ENCODE measurements at regions of chrX and their contacts with region 1.

Region 1: DNA sequence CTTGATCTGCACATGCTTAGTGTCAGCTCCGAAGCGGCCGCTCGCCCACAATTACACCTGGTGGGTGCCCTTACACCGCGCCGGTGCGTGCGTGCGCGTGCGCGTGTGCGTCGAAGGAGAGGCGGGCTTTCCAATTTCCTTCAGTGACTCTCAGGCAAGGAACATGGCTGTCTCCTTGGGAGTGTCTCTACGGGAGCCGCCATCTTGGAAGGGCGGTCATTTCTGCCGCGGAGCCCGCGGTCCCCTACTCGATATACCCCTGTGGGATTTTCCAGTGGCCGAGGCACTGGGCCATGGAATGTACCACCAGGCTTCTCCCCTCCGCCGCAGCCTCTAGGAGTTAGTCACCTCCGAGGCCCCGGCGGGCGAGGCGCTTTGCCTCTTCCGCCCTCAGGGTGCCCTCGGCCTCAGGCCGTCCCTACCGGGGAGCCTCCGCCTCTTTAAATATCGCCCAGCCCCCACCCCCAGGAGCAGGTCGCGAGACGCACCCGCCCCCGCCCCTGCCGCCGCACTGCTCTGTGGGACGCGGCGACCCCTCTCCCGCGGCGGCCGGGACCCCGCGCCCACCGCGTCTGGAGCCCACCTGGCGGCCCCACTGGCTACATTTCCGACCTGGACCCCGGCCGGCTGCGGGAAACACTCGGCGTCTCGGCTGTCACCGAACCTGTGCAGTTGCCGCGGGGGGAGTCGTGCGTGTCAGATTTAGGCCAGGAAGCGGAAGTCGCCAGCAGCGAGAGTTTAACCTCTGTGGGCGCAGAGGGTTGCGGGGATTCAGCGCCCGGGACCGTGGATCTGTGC is at the start of gene ZNF41:
- DNase-seq: peak; percentile 87
- ATAC-seq: peak; percentile 82
- H3K4me3 ChIP-seq: peak within 1 kb of the TSS; percentile 47 to 77 (median 66)
- H3K4me3 Mint-ChIP-seq: peak within 1 kb of the TSS; percentile 91
- H3K27ac ChIP-seq: peak within 1 kb of the TSS; percentile 80 to 90
- H3K27ac Mint-ChIP-seq: peak within 1 kb of the TSS; percentile 96
- H3K4me1 ChIP-seq: peaks cover 4 to 30% of the 10 kb centered on the region in 2 donors
- H3K4me1 Mint-ChIP-seq: peaks cover 34% of the 10 kb centered on the region
- H3K27me3 ChIP-seq: no peaks in the 10 kb centered on the region
- H3K27me3 Mint-ChIP-seq: no peaks in the 10 kb centered on the region
- CTCF ChIP-seq: no peak
- total RNA-seq, gene ZNF41: 17.4 and 18.9 TPM in 2 replicates

Region 2: GRCh38 chrX:46758906-46759644 is 723.6 kb before region 1 on chrX and contains the start of gene SLC9A7:
- CTCF ChIA-PET with region 1: no interaction called
- POLR2A ChIA-PET with region 1: no interaction called
- intact Hi-C with region 1: loop called (anchors 10 kb)
- DNase-seq: peak; percentile 88
- ATAC-seq: peak; percentile 71
- H3K4me3 ChIP-seq: peak within 1 kb of the TSS; percentile 52 to 73 (median 68)
- H3K4me3 Mint-ChIP-seq: peak within 1 kb of the TSS; percentile 97
- H3K27ac ChIP-seq: peak within 1 kb of the TSS; percentile 74 to 88
- H3K27ac Mint-ChIP-seq: peak within 1 kb of the TSS; percentile 96
- H3K4me1 ChIP-seq: peaks cover 23 to 32% of the 10 kb centered on the region in 2 donors
- H3K4me1 Mint-ChIP-seq: peaks cover 38% of the 10 kb centered on the region
- H3K27me3 ChIP-seq: no peaks in the 10 kb centered on the region
- H3K27me3 Mint-ChIP-seq: no peaks in the 10 kb centered on the region
- CTCF ChIP-seq: peak; percentile 68
- total RNA-seq, gene SLC9A7: 51.1 and 53.2 TPM in 2 replicates

Region 3: DNA sequence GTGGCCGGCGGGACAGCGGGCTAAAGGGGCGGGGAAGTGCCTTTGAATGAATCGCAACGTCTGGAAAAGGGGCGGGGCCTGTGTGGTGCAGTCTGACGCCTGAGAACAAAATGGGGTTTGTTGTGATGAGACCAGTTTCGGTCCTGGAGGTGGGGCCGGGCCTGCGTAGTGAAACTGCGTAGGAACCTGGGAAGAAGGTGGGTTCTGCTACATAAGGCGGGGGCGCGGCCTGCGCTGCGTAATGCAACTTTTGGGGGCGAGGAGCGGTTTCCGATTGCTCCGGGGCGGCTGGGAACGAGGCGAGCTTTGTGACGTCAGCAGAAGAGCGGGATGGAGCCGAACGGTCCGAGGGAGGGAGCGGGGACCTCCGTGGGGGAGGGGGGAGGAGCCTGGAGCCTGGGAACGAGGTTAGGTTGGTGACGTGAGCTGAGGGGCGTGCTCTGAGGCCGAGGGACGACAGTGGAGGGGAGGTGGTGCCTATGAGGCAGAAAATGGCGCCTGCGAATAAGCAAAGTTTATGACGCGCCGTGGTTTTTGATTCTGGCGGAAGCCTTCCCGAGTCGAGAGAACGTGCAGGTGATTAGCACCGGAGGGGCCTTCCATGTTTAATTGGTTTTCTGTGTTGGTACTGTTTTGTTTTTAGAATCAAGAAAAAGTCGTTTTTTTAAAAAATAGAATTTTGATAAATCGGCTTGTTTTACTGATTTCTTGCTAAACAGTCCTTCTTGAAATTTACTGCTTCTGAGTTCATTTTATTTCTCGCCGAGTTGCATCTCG is 249.2 kb before region 1 on chrX:
- CTCF ChIA-PET with region 1: no interaction called
- POLR2A ChIA-PET with region 1: no interaction called
- intact Hi-C with region 1: loop called (anchors 5 kb)
- DNase-seq: peak; percentile 96
- ATAC-seq: peak; percentile 88
- H3K4me3 ChIP-seq: peak overlapping the region; percentile 67 to 82 (median 75)
- H3K4me3 Mint-ChIP-seq: peak overlapping the region; percentile 94
- H3K27ac ChIP-seq: peak overlapping the region; percentile 96 to 99
- H3K27ac Mint-ChIP-seq: peak overlapping the region; percentile 99
- H3K4me1 ChIP-seq: peaks cover 0 to 8% of the 10 kb centered on the region in 2 donors
- H3K4me1 Mint-ChIP-seq: peaks cover 21% of the 10 kb centered on the region
- H3K27me3 ChIP-seq: no peaks in the 10 kb centered on the region
- H3K27me3 Mint-ChIP-seq: no peaks in the 10 kb centered on the region
- CTCF ChIP-seq: no peak

Region 4: GRCh38 chrX:47361538-47362511 is 120.9 kb before region 1 on chrX:
- CTCF ChIA-PET with region 1: no interaction called
- POLR2A ChIA-PET with region 1: no interaction called
- intact Hi-C with region 1: loop called (anchors 5 kb)
- DNase-seq: peak; percentile 90
- ATAC-seq: peak; percentile 77
- H3K4me3 ChIP-seq: peak overlapping the region; percentile 39 to 63 (median 55)
- H3K4me3 Mint-ChIP-seq: peak overlapping the region; percentile 90
- H3K27ac ChIP-seq: peak overlapping the region; percentile 86 to 92
- H3K27ac Mint-ChIP-seq: peak overlapping the region; percentile 90
- H3K4me1 ChIP-seq: peaks cover 17 to 29% of the 10 kb centered on the region in 2 donors
- H3K4me1 Mint-ChIP-seq: peaks cover 34% of the 10 kb centered on the region
- H3K27me3 ChIP-seq: no peaks in the 10 kb centered on the region
- H3K27me3 Mint-ChIP-seq: no peaks in the 10 kb centered on the region
- CTCF ChIP-seq: no peak

Region 5: GRCh38 chrX:47523297-47523696 is 40.6 kb after region 1 on chrX:
- CTCF ChIA-PET with region 1: interaction called, 5 read pairs
- POLR2A ChIA-PET with region 1: interaction called, 7 read pairs
- intact Hi-C with region 1: loop called (anchors 2 kb)
- DNase-seq: peak; percentile 87
- ATAC-seq: peak; percentile 99
- H3K4me3 ChIP-seq: peak overlapping the region in 4 of 5 experiments; percentile 51 to 60 (median 57)
- H3K4me3 Mint-ChIP-seq: peak overlapping the region; percentile 71
- H3K27ac ChIP-seq: no peak overlapping the region
- H3K27ac Mint-ChIP-seq: peak overlapping the region; percentile 70
- H3K4me1 ChIP-seq: peaks cover 0 to 8% of the 10 kb centered on the region in 2 donors
- H3K4me1 Mint-ChIP-seq: peaks cover 5% of the 10 kb centered on the region
- H3K27me3 ChIP-seq: no peaks in the 10 kb centered on the region
- H3K27me3 Mint-ChIP-seq: no peaks in the 10 kb centered on the region
- CTCF ChIP-seq: peak; percentile 78

Region 6: DNA sequence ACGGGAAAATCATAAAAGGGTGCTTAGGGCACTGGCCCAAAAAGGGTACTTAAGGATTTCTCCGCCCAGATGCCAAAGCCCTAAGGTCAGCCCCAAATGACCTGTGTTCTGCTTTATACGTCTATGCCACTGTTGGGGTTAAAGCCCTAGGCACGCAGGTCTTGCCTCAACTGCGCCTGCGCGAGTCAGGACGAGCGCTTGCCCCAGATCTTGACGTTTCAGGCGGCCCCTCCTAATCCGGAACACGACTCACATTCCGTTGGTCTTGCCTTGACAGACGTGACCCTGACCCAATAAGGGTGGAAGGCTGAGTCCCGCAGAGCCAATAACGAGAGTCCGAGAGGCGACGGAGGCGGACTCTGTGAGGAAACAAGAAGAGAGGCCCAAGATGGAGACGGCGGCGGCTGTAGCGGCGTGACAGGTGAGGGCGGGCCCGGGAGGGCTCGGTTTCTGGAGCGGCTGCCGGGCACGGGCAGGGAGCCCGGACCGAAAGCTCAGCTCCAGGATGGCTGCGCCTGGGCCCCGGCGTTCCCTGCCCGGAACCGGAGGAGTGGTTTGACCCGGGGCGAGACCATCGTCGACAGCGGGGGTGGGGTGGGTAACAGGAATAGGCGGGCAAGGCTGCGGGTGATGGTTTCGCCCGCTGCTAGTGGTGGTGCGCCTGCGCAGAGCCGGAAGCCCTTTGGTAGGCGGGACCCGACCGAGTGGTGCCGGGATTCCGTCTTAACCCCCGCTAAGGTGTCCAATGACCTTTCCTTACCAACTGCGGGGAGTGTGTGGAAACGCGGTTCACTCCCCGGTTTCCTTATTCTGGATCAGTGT is 78.3 kb after region 1 on chrX and contains the start of gene ARAF:
- CTCF ChIA-PET with region 1: no interaction called
- POLR2A ChIA-PET with region 1: no interaction called
- intact Hi-C with region 1: loop called (anchors 2 kb)
- DNase-seq: peak; percentile 97
- ATAC-seq: peak; percentile 85
- H3K4me3 ChIP-seq: peak within 1 kb of the TSS; percentile 55 to 81 (median 75)
- H3K4me3 Mint-ChIP-seq: peak within 1 kb of the TSS; percentile 87
- H3K27ac ChIP-seq: peak within 1 kb of the TSS; percentile 89 to 91
- H3K27ac Mint-ChIP-seq: peak within 1 kb of the TSS; percentile 96
- H3K4me1 ChIP-seq: peaks cover 6 to 29% of the 10 kb centered on the region in 2 donors
- H3K4me1 Mint-ChIP-seq: peaks cover 35% of the 10 kb centered on the region
- H3K27me3 ChIP-seq: no peaks in the 10 kb centered on the region
- H3K27me3 Mint-ChIP-seq: no peaks in the 10 kb centered on the region
- CTCF ChIP-seq: no peak
- total RNA-seq, gene ARAF: 103 and 127 TPM in 2 replicates

Region 7: GRCh38 chrX:47650164-47651042 is 167.7 kb after region 1 on chrX and contains the start of gene ELK1:
- CTCF ChIA-PET with region 1: no interaction called
- POLR2A ChIA-PET with region 1: no interaction called
- intact Hi-C with region 1: loop called (anchors 2 kb)
- DNase-seq: peak; percentile 94
- ATAC-seq: peak; percentile 91
- H3K4me3 ChIP-seq: peak within 1 kb of the TSS in 4 of 5 experiments; percentile 68 to 77 (median 75)
- H3K4me3 Mint-ChIP-seq: peak within 1 kb of the TSS; percentile 93
- H3K27ac ChIP-seq: peak within 1 kb of the TSS; percentile 69 to 73
- H3K27ac Mint-ChIP-seq: peak within 1 kb of the TSS; percentile 94
- H3K4me1 ChIP-seq: peaks cover 11 to 26% of the 10 kb centered on the region in 2 donors
- H3K4me1 Mint-ChIP-seq: peaks cover 29% of the 10 kb centered on the region
- H3K27me3 ChIP-seq: no peaks in the 10 kb centered on the region
- H3K27me3 Mint-ChIP-seq: no peaks in the 10 kb centered on the region
- CTCF ChIP-seq: no peak
- total RNA-seq, gene ELK1: 20.8 and 22.7 TPM in 2 replicates